Activated B cell treated with CpG ODN at 0.5 μM for 24 hours (primary cell): ENCODE measurements at regions of chr22 and their contacts with region 1.

Region 1: GRCh38 chr22:41697126-41697775 is 2.1 kb upstream of the MEI1 start:
- DNase-seq: peak; percentile 91
- ATAC-seq: peak; percentile 83
- H3K4me3 Mint-ChIP-seq: peak overlapping the region; percentile 63
- H3K27ac Mint-ChIP-seq: peak overlapping the region; percentile 72
- H3K4me1 Mint-ChIP-seq: peaks cover 12% of the 10 kb centered on the region
- H3K27me3 Mint-ChIP-seq: no peaks in the 10 kb centered on the region
- CTCF ChIP-seq: peak; percentile 51

Region 2: DNA sequence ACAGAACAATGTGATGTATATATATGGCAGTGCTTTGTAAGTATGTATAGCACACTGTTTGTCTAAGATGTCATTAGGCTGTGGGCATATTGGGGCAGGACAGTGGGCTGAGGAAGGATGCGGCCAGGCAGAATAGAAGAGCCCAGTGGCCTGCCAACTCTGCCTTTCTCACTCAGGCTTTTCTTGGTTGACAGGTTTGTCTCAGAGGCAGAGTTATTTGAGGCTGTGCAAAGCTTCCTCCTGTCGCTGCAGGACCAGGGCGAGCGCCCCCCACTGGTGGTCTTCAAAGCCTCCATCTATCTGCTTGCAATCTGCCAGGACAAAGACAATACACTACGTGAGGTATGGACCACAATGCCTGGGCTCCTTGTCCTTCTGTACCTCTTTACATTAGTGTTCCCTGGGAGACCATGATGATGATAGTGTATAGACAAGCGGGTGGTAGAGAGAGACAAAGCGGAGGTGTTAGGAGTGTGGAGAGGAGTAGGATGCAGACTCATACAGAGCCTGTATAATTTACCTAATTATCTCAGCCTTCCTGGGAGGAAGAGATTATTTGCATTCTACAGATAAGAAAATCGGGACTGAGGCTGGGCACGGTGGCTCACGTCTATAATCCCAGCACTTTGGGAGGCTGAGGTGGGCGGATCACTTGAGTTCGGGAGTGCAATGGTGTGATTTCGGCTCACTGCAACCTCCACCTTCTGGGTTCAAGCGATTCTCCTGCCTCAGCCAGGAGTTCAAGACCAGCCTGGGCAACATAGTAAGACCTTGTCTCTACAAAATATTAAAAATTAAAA is 65.9 kb after region 1 on chr22:
- CTCF ChIA-PET with region 1: interaction called, 5 read pairs
- POLR2A ChIA-PET with region 1: no interaction called
- intact Hi-C with region 1: loop called (anchors 1 kb)
- DNase-seq: no peak
- ATAC-seq: peak; percentile 42
- H3K4me3 Mint-ChIP-seq: no peak overlapping the region
- H3K27ac Mint-ChIP-seq: no peak overlapping the region
- H3K4me1 Mint-ChIP-seq: peaks cover 6% of the 10 kb centered on the region
- H3K27me3 Mint-ChIP-seq: no peaks in the 10 kb centered on the region
- CTCF ChIP-seq: no peak

Region 3: DNA sequence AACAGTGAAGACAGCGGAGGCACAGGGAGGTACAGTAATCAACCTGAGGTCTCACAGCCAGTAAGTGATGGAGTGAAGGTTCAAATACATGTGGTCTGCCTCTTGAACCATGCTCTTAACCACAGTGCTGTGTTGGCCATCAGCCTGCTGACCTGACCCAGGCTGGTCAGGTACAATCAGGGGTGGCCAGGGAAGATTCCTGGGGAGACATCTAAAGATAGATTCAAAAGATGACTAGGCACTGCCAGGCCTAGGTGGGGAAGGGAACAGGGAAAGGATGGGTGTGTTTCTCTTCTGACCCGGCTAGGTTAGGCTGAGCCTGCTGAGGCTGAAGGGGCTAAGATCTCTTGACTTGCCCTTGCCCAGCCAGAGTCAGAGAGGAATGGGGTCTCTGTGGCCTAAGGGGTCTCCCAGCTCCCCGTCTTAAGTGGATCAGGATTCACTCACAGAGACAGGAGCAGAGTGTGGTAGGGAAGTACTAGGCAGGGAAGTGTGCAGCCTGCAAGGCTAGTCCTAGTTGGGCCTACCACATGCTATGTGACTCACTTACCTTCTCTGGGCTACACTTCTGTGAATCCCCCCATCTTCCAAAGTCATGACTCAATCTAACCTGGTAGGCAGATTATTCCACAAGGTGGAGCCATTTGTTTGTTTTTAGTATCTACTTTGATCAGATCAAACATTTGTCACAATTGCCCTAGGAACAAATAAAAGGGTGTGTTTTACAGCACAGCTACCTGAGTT is 125.2 kb after region 1 on chr22:
- CTCF ChIA-PET with region 1: interaction called, 15 read pairs
- POLR2A ChIA-PET with region 1: interaction called, 8 read pairs
- intact Hi-C with region 1: loop called (anchors 1 kb)
- DNase-seq: no peak
- ATAC-seq: peak; percentile 90
- H3K4me3 Mint-ChIP-seq: no peak overlapping the region
- H3K27ac Mint-ChIP-seq: peak overlapping the region; percentile 26
- H3K4me1 Mint-ChIP-seq: peaks cover 5% of the 10 kb centered on the region
- H3K27me3 Mint-ChIP-seq: no peaks in the 10 kb centered on the region
- CTCF ChIP-seq: no peak

Region 4: DNA sequence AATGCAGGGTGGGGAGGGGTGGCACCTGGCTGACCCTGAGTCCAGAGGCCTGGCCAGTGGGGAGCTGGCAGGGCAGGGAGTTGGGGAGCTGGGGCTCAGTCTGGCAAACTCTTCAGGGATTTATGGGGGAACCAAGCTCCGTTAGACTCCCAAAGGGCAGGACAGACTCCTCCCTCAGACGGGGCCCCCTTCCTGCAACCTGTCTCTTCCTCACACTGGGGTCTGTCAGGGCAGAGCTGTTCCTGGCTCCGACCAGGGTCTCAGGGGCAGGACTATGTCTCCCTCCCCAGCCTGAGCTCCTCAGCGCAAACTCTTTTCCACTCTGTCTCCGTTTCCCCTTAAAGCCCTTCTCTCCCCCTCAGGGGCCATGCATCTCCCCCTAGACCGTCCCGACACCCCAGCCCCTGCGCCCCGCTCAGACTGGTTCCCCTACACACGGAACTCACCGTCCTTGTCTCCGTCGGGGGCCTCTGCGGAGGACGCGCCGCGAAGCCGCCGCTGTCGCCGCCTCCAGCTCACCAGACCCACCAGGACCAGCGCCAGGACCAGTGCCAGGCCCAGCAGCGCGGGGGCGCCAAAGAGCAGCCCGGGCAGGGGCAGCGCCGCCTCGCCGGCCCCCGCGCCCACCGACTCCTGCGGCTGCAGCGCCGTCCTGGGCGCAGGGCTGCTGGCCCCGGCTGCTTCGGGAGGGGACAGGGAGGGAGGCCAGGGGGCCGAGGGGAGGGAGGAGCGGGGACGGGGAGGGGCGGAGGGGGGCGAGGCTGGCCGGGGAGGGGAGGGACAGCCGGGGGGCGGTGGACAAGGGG is 228.6 kb after region 1 on chr22:
- CTCF ChIA-PET with region 1: interaction called, 20 read pairs
- POLR2A ChIA-PET with region 1: interaction called, 7 read pairs
- intact Hi-C with region 1: no loop called
- DNase-seq: peak; percentile 90
- ATAC-seq: peak; percentile 45
- H3K4me3 Mint-ChIP-seq: peak overlapping the region; percentile 92
- H3K27ac Mint-ChIP-seq: peak overlapping the region; percentile 94
- H3K4me1 Mint-ChIP-seq: peaks cover 83% of the 10 kb centered on the region
- H3K27me3 Mint-ChIP-seq: no peaks in the 10 kb centered on the region
- CTCF ChIP-seq: peak; percentile 26

Region 5: DNA sequence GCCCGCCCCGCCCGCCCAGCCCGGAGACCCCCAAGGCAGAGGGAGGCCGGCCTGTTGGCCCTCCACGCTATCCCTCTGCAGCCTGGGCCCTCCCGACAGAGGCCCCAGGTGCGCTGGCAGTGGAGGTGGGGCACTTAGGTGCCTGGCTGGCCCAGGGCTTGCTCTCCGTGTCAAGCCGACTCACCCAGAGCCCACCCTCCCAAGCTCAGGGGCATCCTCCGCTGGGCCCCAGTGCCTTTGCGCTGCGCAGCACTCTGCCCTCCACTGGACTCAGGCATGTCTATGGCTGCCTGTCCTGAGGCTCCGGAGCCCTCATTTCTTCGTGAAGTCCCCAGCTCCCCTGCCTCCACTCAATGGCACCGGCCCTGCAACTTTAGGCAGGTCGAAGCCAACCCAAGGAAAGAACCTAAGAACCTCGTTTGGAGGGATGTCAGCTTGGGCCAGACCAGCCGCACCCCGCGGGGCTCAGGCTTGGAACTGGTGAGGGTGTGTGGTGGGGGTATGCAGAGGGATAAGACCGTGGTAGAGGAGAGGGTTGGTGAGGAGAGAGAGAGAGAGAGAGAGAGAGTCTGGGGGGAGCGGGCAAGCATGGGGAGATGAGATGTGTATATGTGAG is 260.8 kb after region 1 on chr22:
- CTCF ChIA-PET with region 1: interaction called, 11 read pairs
- POLR2A ChIA-PET with region 1: interaction called, 9 read pairs
- intact Hi-C with region 1: loop called (anchors 1 kb)
- DNase-seq: no peak
- ATAC-seq: no peak
- H3K4me3 Mint-ChIP-seq: no peak overlapping the region
- H3K27ac Mint-ChIP-seq: no peak overlapping the region
- H3K4me1 Mint-ChIP-seq: peaks cover 15% of the 10 kb centered on the region
- H3K27me3 Mint-ChIP-seq: no peaks in the 10 kb centered on the region
- CTCF ChIP-seq: peak; percentile 12